ENCODE measurements at regions of chr12 and their contacts with region 1.

Region 1: GRCh38 chr12:91382081-91382543 is 199.5 kb upstream of the DCN start:
- DNase-seq: peak; percentile 62
- H3K4me3 ChIP-seq: peak overlapping the region; percentile 61
- H3K27ac ChIP-seq: no peak overlapping the region
- H3K27me3 ChIP-seq: no peaks in the 10 kb centered on the region
- CTCF ChIP-seq: peak; percentile 94

Region 2: DNA sequence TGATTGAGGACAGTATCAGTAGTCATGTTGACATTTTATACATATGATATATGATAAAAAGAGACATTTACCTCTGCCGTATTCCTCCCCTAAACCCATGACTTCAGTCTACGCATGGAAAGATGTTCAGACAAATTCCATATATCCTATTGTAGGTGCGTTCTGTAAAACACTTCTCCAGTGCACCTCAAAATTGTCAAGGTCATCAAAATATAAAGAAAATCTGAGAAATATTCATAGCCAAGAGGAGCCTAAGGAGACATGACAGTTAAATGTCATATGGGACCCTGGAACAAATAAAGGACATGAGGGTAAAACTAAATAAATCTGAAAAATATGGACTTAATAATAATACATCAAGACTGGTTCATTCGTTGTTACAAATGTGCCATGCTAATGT is 498.7 kb before region 1 on chr12:
- CTCF ChIA-PET with region 1: no interaction called
- POLR2A ChIA-PET with region 1: no interaction called
- DNase-seq: no peak
- H3K4me3 ChIP-seq: no peak overlapping the region
- H3K27ac ChIP-seq: no peak overlapping the region
- H3K27me3 ChIP-seq: no peaks in the 10 kb centered on the region
- CTCF ChIP-seq: no peak

Region 3: GRCh38 chr12:91406920-91407341 is 24.8 kb after region 1 on chr12:
- CTCF ChIA-PET with region 1: interaction called, 23 read pairs
- POLR2A ChIA-PET with region 1: no interaction called
- DNase-seq: no peak
- H3K4me3 ChIP-seq: no peak overlapping the region
- H3K27ac ChIP-seq: no peak overlapping the region
- H3K27me3 ChIP-seq: no peaks in the 10 kb centered on the region
- CTCF ChIP-seq: no peak

Region 4: DNA sequence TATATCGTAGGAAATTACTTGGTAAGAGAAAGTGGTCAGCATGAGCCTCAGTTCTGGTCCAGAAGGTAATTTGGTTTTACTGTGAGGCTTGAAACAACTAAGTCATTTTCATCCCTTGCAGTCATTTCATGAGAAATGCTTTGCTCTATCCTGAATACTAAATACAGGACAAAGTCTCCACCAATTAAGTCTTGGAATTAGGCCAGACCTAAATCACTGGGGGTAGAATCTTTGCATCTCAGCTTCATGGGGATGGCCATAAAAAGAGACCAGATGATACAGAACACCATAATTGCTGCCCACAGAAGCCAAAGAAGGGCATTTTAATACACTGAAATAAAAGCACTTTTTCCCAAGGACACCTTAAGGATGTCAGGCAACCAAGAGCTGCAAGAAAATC is 78.4 kb after region 1 on chr12:
- CTCF ChIA-PET with region 1: no interaction called
- POLR2A ChIA-PET with region 1: no interaction called
- DNase-seq: no peak
- H3K4me3 ChIP-seq: no peak overlapping the region
- H3K27ac ChIP-seq: no peak overlapping the region
- H3K27me3 ChIP-seq: peaks cover 2% of the 10 kb centered on the region
- CTCF ChIP-seq: no peak

Region 5: GRCh38 chr12:91630596-91631293 is 248.6 kb after region 1 on chr12:
- CTCF ChIA-PET with region 1: no interaction called
- POLR2A ChIA-PET with region 1: no interaction called
- DNase-seq: no peak
- H3K4me3 ChIP-seq: no peak overlapping the region
- H3K27ac ChIP-seq: no peak overlapping the region
- H3K27me3 ChIP-seq: no peaks in the 10 kb centered on the region
- CTCF ChIP-seq: no peak

Region 6: GRCh38 chr12:91811481-91812287 is 429.6 kb after region 1 on chr12:
- CTCF ChIA-PET with region 1: interaction called, 21 read pairs
- POLR2A ChIA-PET with region 1: no interaction called
- DNase-seq: peak; percentile 21
- H3K4me3 ChIP-seq: no peak overlapping the region
- H3K27ac ChIP-seq: no peak overlapping the region
- H3K27me3 ChIP-seq: no peaks in the 10 kb centered on the region
- CTCF ChIP-seq: peak; percentile 88

Region 7: GRCh38 chr12:92408072-92408900 is 1026.2 kb after region 1 on chr12:
- CTCF ChIA-PET with region 1: interaction called, 10 read pairs
- POLR2A ChIA-PET with region 1: no interaction called
- DNase-seq: no peak
- H3K4me3 ChIP-seq: no peak overlapping the region
- H3K27ac ChIP-seq: no peak overlapping the region
- H3K27me3 ChIP-seq: peaks cover 3% of the 10 kb centered on the region
- CTCF ChIP-seq: peak; percentile 63

Region 8: GRCh38 chr12:92608151-92609091 is 1226.3 kb after region 1 on chr12:
- CTCF ChIA-PET with region 1: interaction called, 49 read pairs
- POLR2A ChIA-PET with region 1: no interaction called
- DNase-seq: no peak
- H3K4me3 ChIP-seq: no peak overlapping the region
- H3K27ac ChIP-seq: no peak overlapping the region
- H3K27me3 ChIP-seq: no peaks in the 10 kb centered on the region
- CTCF ChIP-seq: peak; percentile 72

Measured in AG04450 (cell line).